ENCODE measurements at regions of chr20 and their contacts with region 1.

Region 1: GRCh38 chr20:40945754-40946450 is 82.7 kb upstream of the TOP1 start:
- DNase-seq: peak; percentile 60
- H3K4me3 ChIP-seq: no peak overlapping the region
- CTCF ChIP-seq: peak; percentile 93

Region 2: DNA sequence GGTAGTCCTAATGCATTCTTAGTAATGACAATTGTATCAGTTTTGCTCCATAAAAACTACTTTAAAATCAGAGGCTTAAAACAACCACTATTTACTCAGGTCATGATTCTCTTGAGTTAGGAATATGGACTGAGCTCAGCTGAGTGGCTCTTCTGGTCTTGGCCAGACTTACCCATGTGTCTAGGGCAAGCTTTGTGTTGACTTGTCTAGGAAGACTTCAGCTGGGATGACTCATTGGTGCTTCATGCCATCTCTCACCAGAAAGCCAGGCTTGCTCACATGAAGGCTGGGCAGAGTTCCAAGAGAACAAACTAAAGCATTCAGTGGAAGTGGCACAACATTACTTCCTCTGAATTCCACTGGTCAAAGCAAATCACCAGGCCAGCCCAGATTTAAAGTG is 1828.4 kb before region 1 on chr20:
- in situ Hi-C with region 1: loop called (anchors 5 kb)
- DNase-seq: no peak
- H3K4me3 ChIP-seq: no peak overlapping the region
- CTCF ChIP-seq: no peak

Region 3: GRCh38 chr20:40908309-40908708 is 37.6 kb before region 1 on chr20:
- in situ Hi-C with region 1: no loop called
- DNase-seq: no peak
- H3K4me3 ChIP-seq: no peak overlapping the region
- CTCF ChIP-seq: no peak

Measured in astrocyte of the cerebellum (primary cell).